IMR-90 (cell line): ENCODE measurements at regions of chr4 and their contacts with region 1.

Region 1: DNA sequence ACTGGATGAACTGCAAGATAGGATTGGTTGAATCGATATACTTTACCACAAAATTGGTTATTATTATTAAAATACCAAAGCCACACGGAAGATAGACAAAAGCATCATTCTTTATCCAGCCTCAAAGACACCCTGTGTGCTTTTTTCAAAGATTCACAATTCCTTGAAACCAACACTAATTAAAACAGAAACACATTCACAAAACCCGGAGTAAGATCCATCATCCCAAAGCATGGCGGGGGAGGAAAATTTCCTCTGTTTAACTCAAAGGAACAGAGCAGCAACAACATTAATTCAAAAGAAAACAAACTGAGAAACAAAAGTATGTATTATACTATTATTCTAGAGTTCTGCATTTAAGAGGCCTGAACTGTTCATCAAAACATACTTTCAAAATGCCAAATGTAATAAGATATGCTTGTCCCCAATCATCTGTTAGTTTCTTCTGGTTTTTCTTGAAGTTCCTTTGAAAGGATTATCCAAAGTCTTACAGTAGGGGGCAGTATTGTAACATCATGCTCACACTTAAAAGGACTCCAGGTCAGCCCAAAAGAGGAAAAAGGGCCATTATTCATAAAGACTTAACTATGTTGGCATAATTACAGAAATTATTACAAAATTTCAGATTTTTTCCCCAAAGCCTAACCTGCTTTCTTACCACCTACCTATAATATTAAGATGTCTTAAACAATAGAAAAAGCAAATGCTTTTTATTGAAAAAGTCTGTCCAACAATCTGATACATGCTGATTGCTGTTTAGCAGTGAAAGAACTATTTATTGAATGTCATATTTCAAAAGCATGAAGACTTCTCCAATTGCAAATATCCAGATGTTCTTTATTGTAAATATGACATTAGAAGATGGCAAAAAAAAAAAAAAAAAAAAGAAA is 168.7 kb downstream of the SCFD2 start:
- DNase-seq: peak; percentile 90
- ATAC-seq: peak; percentile 82
- H3K4me3 ChIP-seq: peak overlapping the region; percentile 22; the same call in 1 of the 2 replicates
- H3K27ac ChIP-seq: peak overlapping the region; percentile 56; the same call in 1 of the 2 replicates
- H3K4me1 ChIP-seq: no peaks in the 10 kb centered on the region
- H3K27me3 ChIP-seq: no peaks in the 10 kb centered on the region
- CTCF ChIP-seq: peak; percentile 80
- POLR2A ChIP-seq: no peak
- RAD21 ChIP-seq: peak; percentile 85

Region 2: GRCh38 chr4:52376132-52376704 is 820.9 kb before region 1 on chr4:
- CTCF ChIA-PET with region 1: no interaction called
- POLR2A ChIA-PET with region 1: no interaction called
- dilution Hi-C with region 1: no loop called
- in situ Hi-C with region 1: no loop called
- intact Hi-C with region 1: loop called (anchors 2 kb)
- DNase-seq: peak; percentile 47
- ATAC-seq: peak; percentile 48
- H3K4me3 ChIP-seq: no peak overlapping the region
- H3K27ac ChIP-seq: no peak overlapping the region
- H3K4me1 ChIP-seq: no peaks in the 10 kb centered on the region
- H3K27me3 ChIP-seq: peaks cover 9% of the 10 kb centered on the region
- CTCF ChIP-seq: peak; percentile 66
- POLR2A ChIP-seq: no peak
- RAD21 ChIP-seq: peak; percentile 69

Region 3: GRCh38 chr4:53089936-53090729 is 107.0 kb before region 1 on chr4:
- CTCF ChIA-PET with region 1: no interaction called
- POLR2A ChIA-PET with region 1: no interaction called
- dilution Hi-C with region 1: no loop called
- in situ Hi-C with region 1: no loop called
- intact Hi-C with region 1: no loop called
- DNase-seq: no peak
- ATAC-seq: peak; percentile 21; the same call in 1 of the 2 replicates
- H3K4me3 ChIP-seq: no peak overlapping the region
- H3K27ac ChIP-seq: no peak overlapping the region
- H3K4me1 ChIP-seq: no peaks in the 10 kb centered on the region
- H3K27me3 ChIP-seq: no peaks in the 10 kb centered on the region
- CTCF ChIP-seq: no peak
- POLR2A ChIP-seq: no peak
- RAD21 ChIP-seq: no peak

Region 4: DNA sequence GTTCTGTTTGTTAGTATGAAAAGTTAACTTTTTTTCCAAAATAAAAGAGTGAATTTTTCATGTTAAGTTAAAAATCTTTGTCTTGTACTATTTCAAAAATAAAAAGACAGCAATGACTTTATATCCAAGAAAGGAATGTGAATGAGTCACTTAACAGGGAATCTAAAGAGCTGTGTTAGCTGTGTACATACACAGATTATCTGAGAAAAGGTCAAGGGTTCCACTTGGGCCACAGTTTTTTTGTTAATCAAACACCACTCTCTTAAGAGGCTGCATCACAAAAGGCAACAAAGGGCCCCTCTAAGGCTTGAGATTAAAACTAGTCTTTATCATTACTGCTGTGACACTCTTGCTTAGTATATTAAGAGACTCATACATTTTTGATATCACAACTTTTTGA is 262.4 kb after region 1 on chr4:
- CTCF ChIA-PET with region 1: no interaction called
- POLR2A ChIA-PET with region 1: no interaction called
- dilution Hi-C with region 1: no loop called
- in situ Hi-C with region 1: no loop called
- intact Hi-C with region 1: loop called (anchors 10 kb)
- DNase-seq: peak; percentile 60
- ATAC-seq: peak; percentile 88
- H3K4me3 ChIP-seq: no peak overlapping the region
- H3K27ac ChIP-seq: no peak overlapping the region; the same call in 1 of the 2 replicates
- H3K4me1 ChIP-seq: peaks cover 6% of the 10 kb centered on the region
- H3K27me3 ChIP-seq: no peaks in the 10 kb centered on the region
- CTCF ChIP-seq: no peak
- POLR2A ChIP-seq: no peak
- RAD21 ChIP-seq: no peak

Region 5: DNA sequence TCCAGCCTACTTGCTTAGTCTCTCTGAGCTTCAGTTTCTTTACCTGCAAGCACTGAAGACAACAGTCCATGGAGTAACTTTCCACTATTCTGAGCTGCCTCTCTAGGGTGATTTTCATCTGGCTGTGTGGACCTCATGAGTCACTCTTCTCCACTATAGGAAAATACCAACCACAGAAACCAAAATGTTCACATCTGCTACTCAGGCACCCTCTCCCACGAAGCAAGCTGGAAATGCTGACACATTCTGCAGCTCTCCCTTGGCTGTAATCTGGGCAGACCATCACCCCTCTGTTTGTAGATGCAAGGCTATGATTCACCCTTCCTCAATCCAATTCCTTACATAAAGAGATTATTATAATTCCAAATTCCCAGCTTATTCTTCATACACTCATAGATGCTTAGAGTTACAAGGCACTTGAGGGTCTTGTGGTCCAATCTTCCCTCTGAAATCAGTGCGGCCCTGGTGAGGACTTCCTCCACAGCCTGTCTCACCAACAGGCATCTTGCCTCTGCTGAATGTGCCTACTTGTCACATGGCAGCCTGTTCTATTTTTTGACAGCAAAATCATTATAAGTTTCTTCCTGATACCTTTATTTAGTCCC is 491.2 kb after region 1 on chr4:
- CTCF ChIA-PET with region 1: no interaction called
- POLR2A ChIA-PET with region 1: no interaction called
- dilution Hi-C with region 1: no loop called
- in situ Hi-C with region 1: no loop called
- intact Hi-C with region 1: loop called (anchors 5 kb)
- DNase-seq: peak; percentile 100
- ATAC-seq: peak; percentile 95
- H3K4me3 ChIP-seq: no peak overlapping the region
- H3K27ac ChIP-seq: peak overlapping the region; percentile 89
- H3K4me1 ChIP-seq: peaks cover 12% of the 10 kb centered on the region
- H3K27me3 ChIP-seq: no peaks in the 10 kb centered on the region
- CTCF ChIP-seq: no peak
- POLR2A ChIP-seq: no peak
- RAD21 ChIP-seq: peak; percentile 22

Region 6: GRCh38 chr4:53786632-53787031 is 589.5 kb after region 1 on chr4:
- CTCF ChIA-PET with region 1: no interaction called
- POLR2A ChIA-PET with region 1: no interaction called
- dilution Hi-C with region 1: no loop called
- in situ Hi-C with region 1: no loop called
- intact Hi-C with region 1: loop called (anchors 5 kb)
- DNase-seq: peak; percentile 93
- ATAC-seq: peak; percentile 77
- H3K4me3 ChIP-seq: no peak overlapping the region
- H3K27ac ChIP-seq: peak overlapping the region; percentile 93
- H3K4me1 ChIP-seq: peaks cover 39% of the 10 kb centered on the region
- H3K27me3 ChIP-seq: no peaks in the 10 kb centered on the region
- CTCF ChIP-seq: no peak
- POLR2A ChIP-seq: no peak
- RAD21 ChIP-seq: no peak

Region 7: DNA sequence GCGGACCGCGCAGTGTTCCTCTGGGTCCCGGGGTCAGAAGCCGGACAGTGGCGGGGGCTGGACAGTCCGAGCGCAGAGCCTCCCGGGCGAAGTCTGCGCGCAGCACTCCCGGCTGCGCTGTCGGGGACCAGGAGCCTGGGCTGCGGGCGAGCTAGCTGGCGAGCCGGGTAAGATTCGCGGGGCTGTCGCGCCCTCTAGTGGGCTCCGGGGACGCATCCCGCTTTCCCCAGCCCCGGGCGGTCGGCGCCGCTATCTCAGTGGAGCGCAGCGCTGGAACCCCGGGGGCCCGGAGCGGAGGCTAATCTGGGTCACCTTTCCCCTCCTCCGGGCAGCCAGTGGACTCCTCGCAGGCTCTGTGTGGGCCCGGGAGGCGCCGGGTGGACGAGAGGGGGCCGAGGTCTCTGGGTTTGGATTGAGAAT is 1036.2 kb after region 1 on chr4:
- CTCF ChIA-PET with region 1: no interaction called
- POLR2A ChIA-PET with region 1: no interaction called
- dilution Hi-C with region 1: no loop called
- in situ Hi-C with region 1: loop called (anchors 5 kb)
- intact Hi-C with region 1: loop called (anchors 1 kb)
- DNase-seq: peak; percentile 85
- ATAC-seq: peak; percentile 36
- H3K4me3 ChIP-seq: peak overlapping the region; percentile 89
- H3K27ac ChIP-seq: peak overlapping the region; percentile 94
- H3K4me1 ChIP-seq: peaks cover 2% of the 10 kb centered on the region
- H3K27me3 ChIP-seq: no peaks in the 10 kb centered on the region
- CTCF ChIP-seq: peak; percentile 85
- POLR2A ChIP-seq: no peak
- RAD21 ChIP-seq: peak; percentile 92